Gastrocnemius medialis (tissue), 4 donors: ENCODE measurements at regions of chr13 and their contacts with region 1.

Region 1: DNA sequence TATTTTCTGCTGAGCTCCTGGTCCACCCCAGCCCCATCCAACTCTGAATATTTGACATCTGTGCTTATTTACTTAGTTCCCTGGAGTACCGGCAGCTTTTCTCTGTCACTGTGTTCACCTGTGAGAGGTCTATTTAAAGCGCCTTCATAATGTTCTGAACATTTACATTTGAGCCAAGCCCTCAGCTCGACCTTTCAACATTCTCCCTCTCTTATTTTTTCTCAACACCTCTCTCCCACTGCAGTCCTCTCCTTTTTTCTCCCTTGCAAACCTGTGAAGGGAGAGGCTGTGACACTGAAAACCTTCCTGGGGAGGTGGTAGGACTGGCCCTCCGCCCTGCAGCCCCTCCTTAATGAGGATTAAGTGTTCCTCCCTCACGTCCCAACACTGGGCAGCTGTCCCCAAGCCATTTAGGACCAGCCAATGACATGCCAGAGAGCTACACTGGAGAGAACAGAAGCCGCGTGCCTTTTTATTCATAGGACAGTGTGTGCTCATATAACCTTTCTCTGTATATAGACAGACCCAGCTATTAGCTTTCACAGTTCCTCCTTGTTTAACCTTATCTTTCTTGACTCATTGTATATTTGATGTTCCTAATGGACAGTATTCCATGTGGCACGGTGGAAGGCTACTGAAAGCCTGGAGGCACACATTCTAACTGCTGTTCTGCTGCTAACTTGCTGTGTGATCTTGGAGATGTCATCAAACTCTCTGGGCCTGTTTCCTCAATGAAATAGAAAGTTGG is 134.8 kb downstream of the NUFIP1 start:
- DNase-seq: peak; percentile 96 to 99
- ATAC-seq: peak; percentile 88 to 92
- H3K4me3 ChIP-seq: peak overlapping the region in 2 of 4 donors; percentile 9 to 21
- H3K27ac ChIP-seq: peak overlapping the region; percentile 88 to 95 (median 93)
- H3K4me1 ChIP-seq: peaks cover 34 to 38% of the 10 kb centered on the region in 2 donors
- H3K27me3 ChIP-seq: no peaks in the 10 kb centered on the region
- CTCF ChIP-seq: no peak
- POLR2A ChIP-seq: peak; percentile 46 to 61

Region 2: DNA sequence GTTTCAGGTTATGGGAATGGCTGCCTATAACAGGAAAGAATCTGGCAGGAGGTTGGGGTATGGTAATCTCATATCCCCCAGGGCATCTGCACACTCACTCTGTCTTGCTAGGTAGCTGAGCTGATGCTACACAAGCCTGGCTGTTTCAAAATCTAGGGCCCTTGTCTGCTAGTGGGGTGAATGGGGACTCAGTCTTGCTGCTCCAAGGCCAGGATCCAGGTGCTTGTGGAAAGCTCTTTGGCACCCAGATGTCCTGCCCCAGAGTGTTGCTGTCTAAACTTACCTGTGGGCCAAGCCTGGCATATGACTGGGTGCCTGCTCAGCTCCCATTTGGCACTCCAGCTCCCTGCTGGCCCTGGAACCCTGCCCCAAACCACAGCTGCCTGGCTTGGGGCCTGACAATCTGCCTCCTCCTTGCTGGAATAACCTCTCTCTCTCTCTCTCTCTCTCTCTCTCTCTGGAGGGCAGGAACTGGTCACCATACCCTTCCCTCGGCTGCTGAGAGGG is 120.2 kb before region 1 on chr13:
- in situ Hi-C with region 1: no loop called
- intact Hi-C with region 1: loop called (anchors 1 kb)
- DNase-seq: peak; percentile 94 to 98
- ATAC-seq: peak; percentile 80 to 83
- H3K4me3 ChIP-seq: peak overlapping the region in 1 of 4 donors; percentile 24
- H3K27ac ChIP-seq: peak overlapping the region; percentile 88 to 94 (median 92)
- H3K4me1 ChIP-seq: peaks cover 38 to 42% of the 10 kb centered on the region in 2 donors
- H3K27me3 ChIP-seq: no peaks in the 10 kb centered on the region
- CTCF ChIP-seq: no peak
- POLR2A ChIP-seq: no peak

Region 3: GRCh38 chr13:44759384-44760360 is 94.8 kb before region 1 on chr13:
- in situ Hi-C with region 1: no loop called
- intact Hi-C with region 1: loop called (anchors 2 kb)
- DNase-seq: peak; percentile 68 to 86
- ATAC-seq: peak; percentile 81 to 86
- H3K4me3 ChIP-seq: peak overlapping the region in 3 of 4 donors; percentile 30 to 36 (median 33)
- H3K27ac ChIP-seq: peak overlapping the region; percentile 89 to 96 (median 96)
- H3K4me1 ChIP-seq: peaks cover 32 to 47% of the 10 kb centered on the region in 2 donors
- H3K27me3 ChIP-seq: no peaks in the 10 kb centered on the region
- CTCF ChIP-seq: no peak
- POLR2A ChIP-seq: peak in 1 of 2 donors; percentile 33

Region 4: DNA sequence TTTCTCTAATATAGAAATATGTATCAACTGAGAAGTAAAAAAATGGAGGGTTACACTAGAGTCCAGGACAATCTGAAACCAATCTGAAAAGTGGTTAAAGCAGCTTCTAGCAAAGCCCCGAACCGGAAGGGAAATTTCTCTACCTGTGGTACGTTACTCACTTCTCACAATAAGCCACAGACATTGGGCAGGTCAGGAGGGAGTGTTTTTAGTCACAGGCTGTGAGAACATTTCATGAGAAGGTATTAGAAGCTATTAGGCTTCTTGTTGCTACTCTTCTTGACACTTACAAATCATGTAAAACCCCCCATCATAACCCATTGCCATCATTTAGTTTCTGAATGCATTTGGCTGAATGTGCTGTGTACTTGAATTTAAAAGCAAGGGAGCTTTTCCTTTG is 13.9 kb after region 1 on chr13:
- in situ Hi-C with region 1: no loop called
- intact Hi-C with region 1: loop called (anchors 1 kb)
- DNase-seq: no peak
- ATAC-seq: no peak
- H3K4me3 ChIP-seq: no peak overlapping the region
- H3K27ac ChIP-seq: peak overlapping the region; percentile 86 to 95 (median 94)
- H3K4me1 ChIP-seq: peaks cover 32 to 34% of the 10 kb centered on the region in 2 donors
- H3K27me3 ChIP-seq: no peaks in the 10 kb centered on the region
- CTCF ChIP-seq: no peak
- POLR2A ChIP-seq: no peak

Region 5: GRCh38 chr13:44930963-44931623 is 76.6 kb after region 1 on chr13:
- in situ Hi-C with region 1: no loop called
- intact Hi-C with region 1: loop called (anchors 1 kb)
- DNase-seq: peak; percentile 76 to 83
- ATAC-seq: peak; percentile 92 to 95
- H3K4me3 ChIP-seq: no peak overlapping the region
- H3K27ac ChIP-seq: peak overlapping the region; percentile 75 to 86 (median 82)
- H3K4me1 ChIP-seq: peaks cover 39 to 49% of the 10 kb centered on the region in 2 donors
- H3K27me3 ChIP-seq: no peaks in the 10 kb centered on the region
- CTCF ChIP-seq: no peak
- POLR2A ChIP-seq: peak; percentile 19 to 53